HEK293T (cell line): ENCODE measurements at regions of chr9 and their contacts with region 1.

Region 1: DNA sequence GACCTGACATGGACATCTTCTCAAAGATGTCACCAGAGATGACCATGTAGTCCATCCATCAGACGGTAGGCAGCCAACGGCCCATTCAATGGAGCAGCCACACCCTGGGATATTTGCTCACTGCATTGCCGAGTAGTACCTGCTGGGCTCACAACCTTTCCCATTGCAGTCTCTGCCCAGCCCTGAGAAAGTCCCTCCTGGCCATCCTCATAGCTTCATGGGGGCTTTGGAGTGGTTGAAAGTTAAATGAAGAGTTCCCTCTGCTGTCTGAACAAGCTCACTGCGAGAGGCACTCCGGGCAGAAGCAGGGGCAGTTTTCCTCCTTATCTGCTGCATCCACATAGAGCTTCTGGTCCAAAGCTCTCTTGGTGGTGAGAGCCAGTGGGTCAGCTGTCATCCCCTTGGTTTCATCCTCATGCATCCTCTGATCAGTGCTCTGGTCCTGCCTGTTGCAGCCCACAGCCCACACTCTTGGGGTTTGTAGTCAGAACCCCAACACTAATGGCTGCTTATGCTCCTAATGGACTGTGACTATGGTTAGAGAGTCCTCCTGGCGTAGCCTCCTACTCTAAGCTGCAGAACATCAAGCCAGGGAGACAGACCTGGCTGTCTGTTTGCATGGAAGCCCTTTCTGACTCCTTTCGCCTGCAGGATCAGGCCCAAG is 23.4 kb downstream of the TNFSF8 start:
- DNase-seq: peak; percentile 56

Region 2: GRCh38 chr9:114681594-114682332 is 225.3 kb before region 1 on chr9 and contains the start of gene TEX48:
- CTCF ChIA-PET with region 1: interaction called, 19 read pairs
- POLR2A ChIA-PET with region 1: no interaction called
- DNase-seq: peak; percentile 65

Region 3: GRCh38 chr9:114738581-114739316 is 168.3 kb before region 1 on chr9:
- CTCF ChIA-PET with region 1: interaction called, 23 read pairs
- POLR2A ChIA-PET with region 1: interaction called, 3 read pairs
- DNase-seq: peak; percentile 77

Region 4: GRCh38 chr9:114953917-114954316 is 46.9 kb after region 1 on chr9:
- CTCF ChIA-PET with region 1: no interaction called
- POLR2A ChIA-PET with region 1: no interaction called
- DNase-seq: no peak

Region 5: GRCh38 chr9:115204904-115205453 is 297.9 kb after region 1 on chr9:
- CTCF ChIA-PET with region 1: no interaction called
- POLR2A ChIA-PET with region 1: no interaction called
- DNase-seq: no peak